ENCODE measurements at regions of chr17 and their contacts with region 1.

Region 1: GRCh38 chr17:55348749-55349354 is 72.8 kb downstream of the MMD start:
- DNase-seq: no peak
- H3K4me3 ChIP-seq: no peak overlapping the region
- H3K27ac ChIP-seq: no peak overlapping the region
- H3K4me1 ChIP-seq: peaks cover 0 to 8% (median 0%) of the 10 kb centered on the region in 6 donors
- H3K27me3 ChIP-seq: no peaks in the 10 kb centered on the region
- CTCF ChIP-seq: peak; percentile 31 to 81 (median 69)
- POLR2A ChIP-seq: no peak

Region 2: DNA sequence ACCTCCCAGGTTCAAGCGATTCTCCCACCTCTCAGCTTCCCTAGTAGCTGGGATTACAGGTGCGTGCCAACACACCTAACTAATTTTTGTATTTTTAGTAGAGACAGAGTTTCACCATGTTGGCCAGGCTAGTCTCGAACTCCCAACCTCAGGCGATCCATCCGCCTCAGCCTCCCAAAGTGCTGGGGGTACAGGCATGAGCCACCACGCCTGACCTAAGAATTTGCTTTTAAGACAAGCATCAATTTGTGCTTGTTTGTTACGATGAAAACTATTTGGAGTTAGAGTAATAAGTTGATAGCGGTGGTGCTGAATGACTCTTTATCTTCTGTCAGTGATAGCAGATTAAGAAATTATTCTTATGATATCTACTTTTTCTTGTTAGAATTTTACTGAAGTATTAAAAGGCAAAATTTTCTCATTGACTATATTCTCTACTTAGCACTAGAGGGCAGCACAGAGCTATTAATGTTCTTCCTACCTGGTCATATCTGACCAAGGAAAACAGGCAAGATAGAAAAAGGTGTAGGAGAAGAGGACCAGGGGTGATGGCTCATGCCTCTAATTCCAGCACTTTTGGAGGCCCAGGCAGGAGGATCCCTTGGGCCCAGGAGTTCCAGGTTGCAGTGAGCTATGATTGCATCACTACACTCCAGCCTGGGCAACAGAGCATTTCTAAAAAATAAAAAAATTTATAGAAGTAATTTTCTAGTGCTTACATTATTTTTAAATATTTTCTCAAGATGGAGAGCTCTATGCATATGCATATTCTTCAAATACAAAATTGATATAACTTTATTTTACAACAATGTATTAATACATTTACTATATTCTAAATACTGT is 355.8 kb before region 1 on chr17:
- intact Hi-C with region 1: loop called (anchors 5 kb)
- DNase-seq: no peak
- H3K4me3 ChIP-seq: no peak overlapping the region
- H3K27ac ChIP-seq: no peak overlapping the region
- H3K4me1 ChIP-seq: no peaks in the 10 kb centered on the region
- H3K27me3 ChIP-seq: no peaks in the 10 kb centered on the region
- CTCF ChIP-seq: peak; percentile 31 to 73 (median 64)
- POLR2A ChIP-seq: no peak

Measured in spleen (tissue), 13 donors.